ENCODE measurements at regions of chr7 and their contacts with region 1.

Region 1: GRCh38 chr7:155796381-155797261 is 15.6 kb downstream of the SHH start:
- DNase-seq: no peak
- H3K4me3 ChIP-seq: peak overlapping the region; percentile 13; the same call in 1 of the 2 replicates
- H3K27ac ChIP-seq: no peak overlapping the region
- H3K27me3 ChIP-seq: peaks cover 24% of the 10 kb centered on the region
- CTCF ChIP-seq: peak; percentile 62

Region 2: DNA sequence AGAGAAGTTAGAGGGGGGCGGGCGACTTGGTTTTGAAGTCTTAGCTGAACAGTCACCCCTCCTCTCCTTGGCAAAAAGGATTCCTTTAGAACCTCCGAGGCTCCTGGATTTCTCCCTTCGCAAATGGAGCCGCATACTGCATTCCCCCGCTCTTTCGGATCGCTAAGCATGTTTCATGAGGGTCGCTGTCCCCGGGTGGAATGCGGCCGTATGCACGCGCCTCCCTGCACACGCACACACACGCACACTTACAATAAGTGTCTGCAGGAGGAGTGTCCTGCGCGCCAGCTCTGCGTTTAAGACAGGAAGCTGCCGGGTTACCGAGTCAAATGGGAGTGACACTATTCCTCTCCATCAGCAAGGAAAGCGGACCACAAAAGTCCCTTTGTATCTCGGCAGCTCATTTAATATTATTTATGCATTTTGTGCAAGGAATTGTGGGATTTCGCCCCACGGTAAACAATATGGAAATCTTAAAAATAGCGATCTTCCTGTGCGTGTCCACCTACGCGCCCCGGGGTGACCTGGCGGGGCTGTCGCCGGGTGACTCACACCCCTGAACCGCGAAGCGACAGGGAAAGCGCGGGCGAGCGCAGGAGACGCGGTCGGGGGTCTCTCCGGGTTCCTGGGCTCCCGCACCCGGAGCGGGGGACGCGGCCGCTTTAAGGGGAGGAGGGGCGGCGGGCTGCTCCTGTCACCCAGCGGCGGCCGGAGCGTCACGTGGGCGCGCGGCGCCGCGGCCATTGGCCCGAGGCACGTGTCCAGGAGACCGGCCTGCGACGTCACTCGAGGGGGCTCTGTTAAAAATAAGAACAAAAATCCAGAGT is 339.7 kb before region 1 on chr7:
- CTCF ChIA-PET with region 1: no interaction called
- POLR2A ChIA-PET with region 1: no interaction called
- DNase-seq: no peak
- H3K4me3 ChIP-seq: peak overlapping the region; percentile 48
- H3K27ac ChIP-seq: no peak overlapping the region
- H3K27me3 ChIP-seq: peaks cover 76% of the 10 kb centered on the region
- CTCF ChIP-seq: no peak

Region 3: GRCh38 chr7:156816943-156817572 is 1020.4 kb after region 1 on chr7:
- CTCF ChIA-PET with region 1: interaction called, 39 read pairs
- POLR2A ChIA-PET with region 1: no interaction called
- DNase-seq: peak; percentile 4
- H3K4me3 ChIP-seq: no peak overlapping the region
- H3K27ac ChIP-seq: no peak overlapping the region
- H3K27me3 ChIP-seq: no peaks in the 10 kb centered on the region
- CTCF ChIP-seq: peak; percentile 55

Region 4: GRCh38 chr7:156827587-156828203 is 1031.1 kb after region 1 on chr7:
- CTCF ChIA-PET with region 1: interaction called, 10 read pairs
- POLR2A ChIA-PET with region 1: no interaction called
- DNase-seq: no peak
- H3K4me3 ChIP-seq: no peak overlapping the region
- H3K27ac ChIP-seq: no peak overlapping the region
- H3K27me3 ChIP-seq: no peaks in the 10 kb centered on the region
- CTCF ChIP-seq: peak; percentile 72

Measured in AG04450 (cell line).